HEK293 (cell line): ENCODE measurements at regions of chr6 and their contacts with region 1.

Region 1: GRCh38 chr6:28838634-28839442 is 84.9 kb downstream of the TRIM27 start:
- H3K4me3 ChIP-seq: peak overlapping the region; percentile 93
- H3K27ac ChIP-seq: peak overlapping the region; percentile 76
- H3K4me1 ChIP-seq: no peaks in the 10 kb centered on the region
- CTCF ChIP-seq: peak; percentile 98

Region 2: DNA sequence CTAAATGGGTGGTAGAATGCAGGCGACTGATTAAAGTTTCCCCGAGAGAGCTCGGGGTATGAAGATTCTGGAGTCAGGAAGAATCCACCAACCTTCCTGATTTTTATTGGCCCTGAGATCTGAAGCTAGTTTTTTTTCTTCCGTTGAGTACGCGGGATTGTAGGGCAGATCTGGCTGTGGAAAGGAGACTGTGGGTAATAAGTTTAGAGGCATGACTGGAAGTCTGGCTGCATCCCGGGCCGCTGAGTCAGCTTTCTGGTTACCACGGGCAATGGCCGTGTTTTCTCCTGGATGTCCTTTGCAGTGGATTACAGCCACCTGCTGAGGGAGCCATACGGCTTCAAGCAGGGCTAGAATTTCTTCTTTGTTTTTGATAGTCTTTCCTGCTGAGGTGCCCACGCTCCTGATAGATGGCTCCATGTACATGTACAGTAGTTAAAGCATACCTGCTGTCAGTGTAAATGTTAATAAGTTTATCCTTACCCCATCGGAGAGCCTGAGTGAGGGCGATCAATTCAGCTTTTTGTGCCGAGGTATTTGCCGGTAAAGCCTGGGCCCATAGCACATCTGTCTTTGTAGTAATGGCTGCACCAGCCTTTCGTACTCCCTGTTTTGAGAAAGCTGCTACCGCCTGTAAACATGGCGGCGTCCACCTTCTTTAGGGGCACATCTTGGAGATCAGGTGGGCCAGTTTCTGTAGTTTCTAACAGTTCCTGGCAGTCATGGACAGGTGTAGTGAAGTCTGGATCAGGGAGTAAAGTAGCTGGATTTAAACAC is 69.0 kb before region 1 on chr6:
- CTCF ChIA-PET with region 1: interaction called, 38 read pairs
- POLR2A ChIA-PET with region 1: interaction called, 3 read pairs
- H3K4me3 ChIP-seq: no peak overlapping the region
- H3K27ac ChIP-seq: no peak overlapping the region
- H3K4me1 ChIP-seq: peaks cover 8% of the 10 kb centered on the region
- CTCF ChIP-seq: 0 out of 2 replicates have a peak, but pooled peaks have one; percentile 57

Region 3: GRCh38 chr6:28824793-28825731 is 13.8 kb before region 1 on chr6:
- CTCF ChIA-PET with region 1: interaction called, 20 read pairs
- POLR2A ChIA-PET with region 1: interaction called, 4 read pairs
- H3K4me3 ChIP-seq: peak overlapping the region; percentile 25
- H3K27ac ChIP-seq: no peak overlapping the region
- H3K4me1 ChIP-seq: no peaks in the 10 kb centered on the region
- CTCF ChIP-seq: no peak

Region 4: GRCh38 chr6:28895134-28895812 is 56.4 kb after region 1 on chr6:
- CTCF ChIA-PET with region 1: interaction called, 4 read pairs
- POLR2A ChIA-PET with region 1: interaction called, 20 read pairs
- H3K4me3 ChIP-seq: peak overlapping the region; percentile 66
- H3K27ac ChIP-seq: peak overlapping the region; percentile 79
- H3K4me1 ChIP-seq: peaks cover 3% of the 10 kb centered on the region; the same call in 1 of the 2 replicates
- CTCF ChIP-seq: no peak

Region 5: DNA sequence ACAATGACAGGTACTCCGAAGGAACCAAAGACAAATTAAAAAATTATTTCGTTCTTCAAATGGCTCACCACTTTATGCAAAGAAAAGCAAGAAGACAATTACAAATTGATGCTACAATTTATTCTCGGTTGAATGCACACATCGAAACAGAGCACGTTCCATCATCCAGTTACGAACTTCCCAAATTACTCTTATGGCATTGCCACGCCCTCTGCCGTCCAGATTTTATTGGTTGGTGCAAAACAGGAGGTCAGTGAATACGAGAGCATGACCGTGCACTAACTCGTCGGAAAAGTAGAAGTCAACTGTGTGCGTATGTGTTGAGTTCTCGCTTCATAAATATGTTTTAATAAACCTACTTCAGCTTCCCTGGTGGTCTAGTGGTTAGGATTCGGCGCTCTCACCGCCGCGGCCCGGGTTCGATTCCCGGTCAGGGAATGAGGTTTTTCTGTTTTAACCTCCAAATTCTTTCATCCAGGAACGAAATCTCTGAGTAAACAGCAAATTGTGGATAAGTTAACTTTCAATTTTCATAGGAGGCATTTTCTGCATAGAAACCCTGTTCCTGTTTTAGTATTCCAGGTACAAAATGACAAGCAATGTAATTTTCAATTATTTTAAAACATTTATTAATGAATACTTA is 143.1 kb after region 1 on chr6:
- CTCF ChIA-PET with region 1: interaction called, 7 read pairs
- POLR2A ChIA-PET with region 1: interaction called, 18 read pairs
- H3K4me3 ChIP-seq: peak overlapping the region; percentile 73
- H3K27ac ChIP-seq: no peak overlapping the region
- H3K4me1 ChIP-seq: peaks cover 5% of the 10 kb centered on the region; the same call in 1 of the 2 replicates
- CTCF ChIP-seq: peak; percentile 50; the same call in 1 of the 2 replicates